PC-9 (cell line): ENCODE measurements at regions of chr11 and their contacts with region 1.

Region 1: GRCh38 chr11:64304316-64305072 is 830 bp upstream of the ESRRA start:
- DNase-seq: peak; percentile 81 to 95
- H3K4me3 ChIP-seq: peak overlapping the region; percentile 74
- H3K27ac ChIP-seq: peak overlapping the region; percentile 71
- H3K4me1 ChIP-seq: peaks cover 27% of the 10 kb centered on the region
- H3K27me3 ChIP-seq: 0 out of 2 replicates have a peak, but pooled peaks cover 7% of the 10 kb centered on the region
- CTCF ChIP-seq: peak; percentile 97

Region 2: DNA sequence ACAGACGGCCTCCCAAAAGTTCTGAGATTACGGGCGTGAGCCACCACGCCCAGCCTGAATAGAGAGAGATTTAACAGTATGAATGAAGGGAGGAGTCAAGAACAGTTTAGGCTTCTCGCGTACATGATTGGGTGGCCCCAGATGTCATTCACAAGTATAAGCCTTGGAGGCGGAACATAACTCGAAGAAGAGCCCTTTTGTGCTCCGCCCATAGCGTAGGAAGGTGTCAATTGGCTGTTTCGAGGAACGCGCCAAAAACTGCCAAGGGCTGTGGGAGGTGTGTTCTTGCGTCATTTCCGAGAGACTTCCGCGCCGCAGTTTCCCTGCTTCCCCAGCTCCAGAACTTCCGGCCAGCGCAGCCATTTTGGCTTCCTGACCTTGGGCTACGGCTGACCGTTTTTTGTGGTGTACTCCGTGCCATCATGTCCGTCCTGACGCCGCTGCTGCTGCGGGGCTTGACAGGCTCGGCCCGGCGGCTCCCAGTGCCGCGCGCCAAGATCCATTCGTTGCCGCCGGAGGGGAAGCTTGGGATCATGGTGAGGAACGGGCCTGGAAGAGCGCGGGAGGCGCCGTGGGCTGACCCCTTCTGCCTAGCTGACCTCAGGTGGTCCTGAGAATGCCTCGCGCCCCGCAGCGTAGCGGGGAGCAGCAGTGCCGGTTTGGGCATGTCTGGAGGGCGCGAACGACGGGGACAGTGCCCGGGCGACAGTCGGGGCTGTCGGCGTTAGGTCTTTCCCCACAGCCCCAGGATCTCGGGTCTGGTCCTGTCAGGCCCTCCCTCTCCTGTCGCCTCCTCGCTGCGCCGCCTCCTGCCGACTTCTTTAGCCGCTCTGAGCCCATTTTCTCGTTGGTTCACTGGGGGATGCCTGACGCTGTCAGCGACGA is 330.0 kb before region 1 on chr11 and contains the start of gene COX8A:
- CTCF ChIA-PET with region 1: no interaction called
- POLR2A ChIA-PET with region 1: no interaction called
- intact Hi-C with region 1: loop called (anchors 10 kb)
- DNase-seq: peak; percentile 98 to 100
- H3K4me3 ChIP-seq: peak within 1 kb of the TSS; percentile 98
- H3K27ac ChIP-seq: peak within 1 kb of the TSS; percentile 62
- H3K4me1 ChIP-seq: peaks cover 13% of the 10 kb centered on the region
- H3K27me3 ChIP-seq: no peaks in the 10 kb centered on the region
- CTCF ChIP-seq: no peak
- total RNA-seq, gene COX8A: 521 and 547 TPM in 2 replicates

Region 3: DNA sequence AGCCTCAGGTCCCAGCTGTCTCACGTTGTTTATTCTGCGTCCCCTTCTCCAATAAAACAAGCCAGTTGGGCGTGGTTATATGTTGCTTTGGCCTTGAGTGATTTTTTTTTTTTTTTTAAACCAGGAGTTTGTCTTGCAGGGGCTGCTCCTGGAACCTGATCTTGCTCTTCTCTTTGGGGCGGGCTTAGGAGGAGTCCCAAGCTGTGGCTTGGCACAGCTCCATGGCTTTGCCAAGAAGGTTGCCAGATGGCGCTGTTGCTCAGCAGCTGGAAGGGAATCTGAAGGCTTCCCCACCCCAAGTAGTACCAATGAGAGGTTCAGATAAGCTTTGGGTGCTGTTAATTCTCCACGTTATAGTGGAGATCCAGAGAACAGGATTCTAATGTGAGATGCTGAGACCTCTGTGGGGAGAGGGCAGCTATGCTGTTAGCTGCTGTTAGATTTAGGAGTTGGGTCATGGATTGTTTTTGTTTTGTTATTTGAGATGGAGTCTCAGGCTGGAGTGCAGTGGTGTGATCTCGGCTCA is 100.0 kb before region 1 on chr11:
- CTCF ChIA-PET with region 1: interaction called, 23 read pairs
- POLR2A ChIA-PET with region 1: no interaction called
- intact Hi-C with region 1: loop called (anchors 1 kb)
- DNase-seq: peak; percentile 85 to 93
- H3K4me3 ChIP-seq: no peak overlapping the region
- H3K27ac ChIP-seq: no peak overlapping the region
- H3K4me1 ChIP-seq: 0 out of 2 replicates have a peak, but pooled peaks cover 4% of the 10 kb centered on the region
- H3K27me3 ChIP-seq: no peaks in the 10 kb centered on the region
- CTCF ChIP-seq: peak; percentile 88

Region 4: GRCh38 chr11:64269380-64270234 is 34.9 kb before region 1 on chr11:
- CTCF ChIA-PET with region 1: interaction called, 12 read pairs
- POLR2A ChIA-PET with region 1: interaction called, 3 read pairs
- intact Hi-C with region 1: loop called (anchors 1 kb)
- DNase-seq: peak; percentile 99
- H3K4me3 ChIP-seq: peak overlapping the region; percentile 63
- H3K27ac ChIP-seq: peak overlapping the region; percentile 89
- H3K4me1 ChIP-seq: peaks cover 25% of the 10 kb centered on the region
- H3K27me3 ChIP-seq: no peaks in the 10 kb centered on the region
- CTCF ChIP-seq: peak; percentile 35; the same call in 1 of the 2 replicates

Region 5: DNA sequence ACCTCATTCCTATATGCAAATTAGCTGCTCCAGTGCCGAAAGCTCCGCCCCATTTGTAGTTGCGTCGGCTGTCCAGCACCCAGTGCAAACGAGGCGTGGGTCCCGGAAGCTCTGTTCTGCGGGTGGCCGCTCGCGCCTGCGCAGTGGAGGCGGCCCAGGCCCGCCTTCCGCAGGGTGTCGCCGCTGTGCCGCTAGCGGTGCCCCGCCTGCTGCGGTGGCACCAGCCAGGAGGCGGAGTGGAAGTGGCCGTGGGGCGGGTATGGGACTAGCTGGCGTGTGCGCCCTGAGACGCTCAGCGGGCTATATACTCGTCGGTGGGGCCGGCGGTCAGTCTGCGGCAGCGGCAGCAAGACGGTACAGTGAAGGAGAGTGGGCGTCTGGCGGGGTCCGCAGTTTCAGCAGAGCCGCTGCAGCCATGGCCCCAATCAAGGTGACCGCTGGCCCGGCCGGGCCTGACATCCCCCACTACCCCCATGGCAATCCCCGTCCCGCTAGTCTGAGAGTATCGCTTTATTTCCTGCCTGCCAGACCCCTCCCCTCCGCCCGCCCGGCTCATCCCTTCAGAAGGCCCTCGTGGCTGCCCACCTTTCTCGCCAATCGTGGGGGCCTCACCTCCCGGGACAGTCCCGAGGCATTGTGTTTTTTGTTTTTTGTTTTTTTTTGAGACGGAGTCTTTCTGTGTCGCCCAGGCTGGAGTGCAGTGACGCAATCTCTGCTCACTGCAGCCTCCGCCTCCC is 13.6 kb after region 1 on chr11 and contains the start of gene PRDX5:
- CTCF ChIA-PET with region 1: interaction called, 13 read pairs
- POLR2A ChIA-PET with region 1: interaction called, 6 read pairs
- intact Hi-C with region 1: loop called (anchors 2 kb)
- DNase-seq: peak; percentile 92 to 99
- H3K4me3 ChIP-seq: peak within 1 kb of the TSS; percentile 69
- H3K27ac ChIP-seq: peak within 1 kb of the TSS; percentile 87
- H3K4me1 ChIP-seq: peaks cover 47% of the 10 kb centered on the region
- H3K27me3 ChIP-seq: no peaks in the 10 kb centered on the region
- CTCF ChIP-seq: peak; percentile 39; the same call in 1 of the 2 replicates
- total RNA-seq, gene PRDX5: 381 and 441 TPM in 2 replicates

Region 6: GRCh38 chr11:64652586-64653387 is 348.3 kb after region 1 on chr11:
- CTCF ChIA-PET with region 1: no interaction called
- POLR2A ChIA-PET with region 1: interaction called, 19 read pairs
- intact Hi-C with region 1: no loop called
- DNase-seq: peak; percentile 46 to 88
- H3K4me3 ChIP-seq: no peak overlapping the region
- H3K27ac ChIP-seq: no peak overlapping the region
- H3K4me1 ChIP-seq: peaks cover 17% of the 10 kb centered on the region
- H3K27me3 ChIP-seq: no peaks in the 10 kb centered on the region
- CTCF ChIP-seq: peak; percentile 97